MCF 10A (cell line): ENCODE measurements at regions of chr1 and their contacts with region 1.

Region 1: DNA sequence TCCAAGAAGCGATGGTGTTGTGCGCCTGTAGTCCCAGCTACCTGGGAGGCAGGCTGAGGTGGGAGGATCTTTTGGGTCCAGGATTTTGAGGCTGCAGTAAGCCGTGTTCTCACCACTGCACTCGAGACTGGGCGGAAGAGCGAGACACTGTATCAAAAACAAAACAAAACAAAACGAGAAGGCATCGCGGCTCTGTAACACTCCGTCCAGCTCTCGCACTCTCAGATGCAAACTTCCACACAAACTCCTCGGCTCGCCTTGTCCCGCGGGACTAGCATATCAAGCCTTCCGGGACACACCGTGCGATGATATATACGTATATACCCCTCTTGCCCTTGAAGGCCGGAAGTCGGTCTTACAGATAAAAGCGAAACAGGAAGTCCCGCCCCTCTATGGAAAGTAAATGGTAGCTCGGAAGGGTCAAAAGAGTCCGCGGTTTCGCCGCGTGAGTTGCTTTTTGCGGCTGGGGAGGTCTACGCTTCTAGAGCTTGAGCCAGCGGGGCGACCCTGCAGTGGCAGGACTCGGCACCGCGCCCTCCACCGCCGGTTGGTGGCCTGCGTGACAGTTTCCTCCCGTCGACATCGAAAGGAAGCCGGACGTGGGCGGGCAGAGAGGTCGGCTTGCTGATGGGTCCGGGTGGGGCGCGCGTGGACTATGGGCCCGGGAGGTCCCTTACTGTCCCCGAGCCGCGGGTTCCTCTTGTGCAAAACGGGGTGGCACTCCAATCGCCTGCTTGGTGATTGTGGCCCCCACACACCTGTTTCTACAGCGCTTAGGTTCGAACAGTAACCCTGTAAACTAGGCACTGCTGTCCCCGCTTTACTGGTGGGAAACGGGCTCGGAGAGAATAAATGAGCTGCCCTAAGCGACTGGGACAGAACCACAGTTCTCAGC is at the start of gene COA6:
- DNase-seq: peak; percentile 100
- H3K4me3 Mint-ChIP-seq: peak within 1 kb of the TSS; percentile 91
- H3K27ac Mint-ChIP-seq: peak within 1 kb of the TSS; percentile 98
- H3K4me1 Mint-ChIP-seq: peaks cover 44% of the 10 kb centered on the region
- H3K27me3 Mint-ChIP-seq: no peaks in the 10 kb centered on the region
- CTCF ChIP-seq: no peak
- total RNA-seq, gene COA6: 114 and 115 TPM in 2 replicates

Region 2: GRCh38 chr1:233635765-233636502 is 737.4 kb before region 1 on chr1:
- CTCF ChIA-PET with region 1: no interaction called
- POLR2A ChIA-PET with region 1: no interaction called
- intact Hi-C with region 1: no loop called
- DNase-seq: peak; percentile 78
- H3K4me3 Mint-ChIP-seq: no peak overlapping the region
- H3K27ac Mint-ChIP-seq: no peak overlapping the region
- H3K4me1 Mint-ChIP-seq: peaks cover 26% of the 10 kb centered on the region
- H3K27me3 Mint-ChIP-seq: no peaks in the 10 kb centered on the region
- CTCF ChIP-seq: no peak

Region 3: GRCh38 chr1:234114648-234115307 is 258.5 kb before region 1 on chr1:
- CTCF ChIA-PET with region 1: interaction called, 4 read pairs
- POLR2A ChIA-PET with region 1: interaction called, 13 read pairs
- intact Hi-C with region 1: loop called (anchors 1 kb)
- DNase-seq: peak; percentile 84
- H3K4me3 Mint-ChIP-seq: peak overlapping the region; percentile 57
- H3K27ac Mint-ChIP-seq: no peak overlapping the region
- H3K4me1 Mint-ChIP-seq: peaks cover 13% of the 10 kb centered on the region
- H3K27me3 Mint-ChIP-seq: no peaks in the 10 kb centered on the region
- CTCF ChIP-seq: peak; percentile 97

Region 4: DNA sequence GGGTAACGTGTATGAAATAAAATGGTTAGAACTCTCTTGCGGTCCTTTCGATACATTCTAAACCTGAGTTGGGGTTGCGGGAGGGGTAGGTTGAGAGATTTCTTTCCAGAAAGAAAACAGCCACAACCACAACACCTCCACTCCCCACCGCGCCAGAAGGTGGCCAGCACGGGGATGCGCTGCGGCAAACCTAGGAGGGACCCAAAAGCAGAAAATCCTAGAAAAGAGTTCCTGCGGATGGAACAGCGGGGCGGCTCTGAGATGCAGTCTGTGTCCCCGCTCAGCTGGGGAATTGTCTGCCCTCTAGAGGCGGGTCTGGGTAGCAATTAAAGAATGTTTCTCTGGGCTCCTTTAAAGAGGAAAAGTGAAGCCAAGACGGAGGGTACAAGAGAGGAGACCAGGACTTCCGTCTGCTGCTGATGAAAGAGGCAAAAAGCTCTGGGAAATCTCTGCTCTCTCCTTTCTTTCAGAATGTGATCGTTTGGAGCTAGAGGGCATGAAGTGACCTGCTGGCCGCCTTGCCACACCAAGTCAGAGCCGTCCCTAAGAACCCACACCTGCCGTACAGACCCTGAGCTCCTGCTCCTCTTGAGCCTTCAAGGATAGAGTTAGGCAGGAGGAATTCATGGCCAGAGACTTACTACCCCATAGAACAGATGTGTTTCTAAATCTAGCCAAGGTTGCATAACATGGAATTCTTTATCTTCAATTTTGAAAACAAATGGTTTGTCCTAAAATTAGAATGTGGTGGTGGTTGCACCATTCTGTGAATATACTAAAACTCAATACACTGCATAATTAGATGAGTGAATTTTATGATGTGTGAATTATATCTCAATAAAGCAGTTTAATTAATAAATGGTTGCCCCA is 46.6 kb before region 1 on chr1:
- CTCF ChIA-PET with region 1: interaction called, 5 read pairs
- POLR2A ChIA-PET with region 1: interaction called, 13 read pairs
- intact Hi-C with region 1: loop called (anchors 2 kb)
- DNase-seq: peak; percentile 82
- H3K4me3 Mint-ChIP-seq: no peak overlapping the region
- H3K27ac Mint-ChIP-seq: no peak overlapping the region
- H3K4me1 Mint-ChIP-seq: peaks cover 6% of the 10 kb centered on the region
- H3K27me3 Mint-ChIP-seq: peaks cover 14% of the 10 kb centered on the region
- CTCF ChIP-seq: peak; percentile 84

Region 5: GRCh38 chr1:234386122-234386521 is 12.8 kb after region 1 on chr1:
- CTCF ChIA-PET with region 1: interaction called, 8 read pairs
- POLR2A ChIA-PET with region 1: interaction called, 97 read pairs
- intact Hi-C with region 1: no loop called
- DNase-seq: no peak
- H3K4me3 Mint-ChIP-seq: no peak overlapping the region
- H3K27ac Mint-ChIP-seq: peak overlapping the region; percentile 53
- H3K4me1 Mint-ChIP-seq: no peaks in the 10 kb centered on the region
- H3K27me3 Mint-ChIP-seq: no peaks in the 10 kb centered on the region
- CTCF ChIP-seq: no peak

Region 6: DNA sequence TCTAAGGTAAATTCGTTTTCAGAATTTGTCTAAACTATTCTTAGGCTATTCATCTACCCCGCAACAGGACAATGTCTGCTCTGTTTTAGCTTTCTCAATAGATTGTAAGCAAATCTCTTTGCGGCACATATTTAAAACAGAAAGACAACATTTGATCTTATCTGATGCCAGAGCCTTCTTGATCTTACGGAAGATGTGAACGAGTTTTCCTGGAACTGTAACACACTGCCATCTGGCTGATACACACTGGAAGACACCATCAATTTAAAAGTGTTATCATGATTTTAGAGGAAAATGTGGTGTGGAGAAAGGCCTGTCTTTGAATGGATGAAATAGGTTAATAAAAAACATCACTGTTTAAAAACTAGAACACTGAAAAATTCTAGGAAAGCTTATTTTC is 36.0 kb after region 1 on chr1:
- CTCF ChIA-PET with region 1: interaction called, 3 read pairs
- POLR2A ChIA-PET with region 1: interaction called, 19 read pairs
- intact Hi-C with region 1: no loop called
- DNase-seq: no peak
- H3K4me3 Mint-ChIP-seq: no peak overlapping the region
- H3K27ac Mint-ChIP-seq: no peak overlapping the region
- H3K4me1 Mint-ChIP-seq: no peaks in the 10 kb centered on the region
- H3K27me3 Mint-ChIP-seq: no peaks in the 10 kb centered on the region
- CTCF ChIP-seq: no peak

Region 7: DNA sequence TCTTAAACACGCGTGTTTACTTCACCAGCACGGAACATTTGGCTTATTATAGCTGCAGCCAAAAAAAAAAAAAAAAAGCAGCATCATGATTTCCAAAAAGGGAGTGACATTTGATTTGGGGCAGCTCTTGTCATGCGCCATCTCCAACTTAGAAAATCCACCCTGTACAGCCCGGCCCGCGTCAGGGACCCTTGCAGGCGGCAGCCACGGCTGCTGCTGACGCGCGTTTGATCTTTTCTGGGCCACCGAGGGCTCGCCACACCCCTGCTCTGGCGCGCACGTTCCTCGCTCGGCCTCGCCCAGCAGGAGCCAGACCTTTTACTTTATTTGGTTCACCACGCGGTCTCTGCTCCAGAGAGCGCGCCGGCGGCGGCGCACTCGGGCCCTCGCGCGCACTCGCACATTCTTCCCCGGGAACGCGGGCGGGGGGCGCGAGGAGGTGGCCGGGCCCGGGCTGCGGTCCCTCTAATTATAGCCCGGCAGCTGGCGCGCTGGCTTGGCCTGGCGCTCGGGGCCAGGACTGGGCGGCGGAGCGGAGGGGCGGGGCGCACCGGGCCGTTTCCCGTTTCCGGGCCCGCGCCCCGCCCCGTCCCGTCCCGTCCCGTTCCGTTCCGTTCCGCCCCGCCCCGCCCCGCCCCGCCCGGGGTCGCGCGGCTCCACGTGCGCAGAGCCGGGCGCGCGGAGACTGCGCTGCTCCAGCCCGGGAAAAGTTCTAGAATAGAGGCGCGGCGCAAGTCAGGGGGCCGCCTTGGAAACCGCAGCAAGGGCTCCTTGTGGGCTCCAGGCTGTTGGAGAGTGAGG is 226.5 kb after region 1 on chr1:
- CTCF ChIA-PET with region 1: interaction called, 3 read pairs
- POLR2A ChIA-PET with region 1: interaction called, 6 read pairs
- intact Hi-C with region 1: loop called (anchors 10 kb)
- DNase-seq: peak; percentile 93
- H3K4me3 Mint-ChIP-seq: peak overlapping the region; percentile 80
- H3K27ac Mint-ChIP-seq: peak overlapping the region; percentile 90
- H3K4me1 Mint-ChIP-seq: peaks cover 41% of the 10 kb centered on the region
- H3K27me3 Mint-ChIP-seq: no peaks in the 10 kb centered on the region
- CTCF ChIP-seq: no peak